Activated CD8-positive, alpha-beta T cell treated with anti-CD3 and anti-CD28 coated beads for 36 hours (primary cell): ENCODE measurements at regions of chr16 and their contacts with region 1.

Region 1: GRCh38 chr16:81715358-81716196 is 63.5 kb upstream of the PLCG2 start:
- DNase-seq: peak; percentile 51
- ATAC-seq: peak; percentile 35
- H3K4me3 Mint-ChIP-seq: peak overlapping the region; percentile 10
- H3K27ac Mint-ChIP-seq: peak overlapping the region; percentile 65
- H3K4me1 Mint-ChIP-seq: peaks cover 43% of the 10 kb centered on the region
- H3K27me3 Mint-ChIP-seq: no peaks in the 10 kb centered on the region
- CTCF ChIP-seq: no peak

Region 2: GRCh38 chr16:81600901-81601428 is 114.6 kb before region 1 on chr16:
- CTCF ChIA-PET with region 1: no interaction called
- POLR2A ChIA-PET with region 1: no interaction called
- intact Hi-C with region 1: no loop called
- DNase-seq: no peak
- ATAC-seq: no peak
- H3K4me3 Mint-ChIP-seq: no peak overlapping the region
- H3K27ac Mint-ChIP-seq: no peak overlapping the region
- H3K4me1 Mint-ChIP-seq: peaks cover 3% of the 10 kb centered on the region
- H3K27me3 Mint-ChIP-seq: no peaks in the 10 kb centered on the region
- CTCF ChIP-seq: no peak

Region 3: GRCh38 chr16:81623363-81624102 is 92.0 kb before region 1 on chr16:
- CTCF ChIA-PET with region 1: interaction called, 11 read pairs
- POLR2A ChIA-PET with region 1: interaction called, 3 read pairs
- intact Hi-C with region 1: no loop called
- DNase-seq: peak; percentile 74
- ATAC-seq: no peak
- H3K4me3 Mint-ChIP-seq: no peak overlapping the region
- H3K27ac Mint-ChIP-seq: no peak overlapping the region
- H3K4me1 Mint-ChIP-seq: peaks cover 5% of the 10 kb centered on the region
- H3K27me3 Mint-ChIP-seq: no peaks in the 10 kb centered on the region
- CTCF ChIP-seq: peak; percentile 69

Region 4: GRCh38 chr16:81632392-81633146 is 83.0 kb before region 1 on chr16:
- CTCF ChIA-PET with region 1: no interaction called
- POLR2A ChIA-PET with region 1: interaction called, 3 read pairs
- intact Hi-C with region 1: loop called (anchors 5 kb)
- DNase-seq: peak; percentile 94
- ATAC-seq: peak; percentile 83
- H3K4me3 Mint-ChIP-seq: peak overlapping the region; percentile 57
- H3K27ac Mint-ChIP-seq: peak overlapping the region; percentile 96
- H3K4me1 Mint-ChIP-seq: peaks cover 69% of the 10 kb centered on the region
- H3K27me3 Mint-ChIP-seq: no peaks in the 10 kb centered on the region
- CTCF ChIP-seq: no peak

Region 5: DNA sequence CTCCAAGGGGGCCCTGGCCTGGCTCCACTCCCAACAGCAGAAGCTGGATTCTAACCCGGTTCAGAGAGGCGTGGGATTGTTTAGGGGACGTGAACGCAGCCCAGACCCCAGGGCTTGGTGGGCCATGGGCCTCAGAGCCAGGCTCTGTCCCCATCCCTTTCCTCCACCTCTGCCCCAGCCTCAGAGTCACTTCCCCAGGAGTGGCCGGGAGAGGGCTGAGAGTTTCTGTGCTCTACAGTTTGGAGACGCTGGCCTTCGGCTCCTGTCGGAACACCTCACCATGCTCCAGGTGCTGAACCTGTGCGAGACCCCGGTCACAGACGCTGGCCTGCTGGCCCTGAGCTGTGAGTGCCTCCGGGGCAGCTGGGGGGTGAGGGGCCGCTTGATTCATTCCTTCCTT is 10.3 kb before region 1 on chr16:
- CTCF ChIA-PET with region 1: no interaction called
- POLR2A ChIA-PET with region 1: no interaction called
- intact Hi-C with region 1: no loop called
- DNase-seq: no peak
- ATAC-seq: no peak
- H3K4me3 Mint-ChIP-seq: no peak overlapping the region
- H3K27ac Mint-ChIP-seq: no peak overlapping the region
- H3K4me1 Mint-ChIP-seq: peaks cover 2% of the 10 kb centered on the region
- H3K27me3 Mint-ChIP-seq: no peaks in the 10 kb centered on the region
- CTCF ChIP-seq: no peak

Region 6: DNA sequence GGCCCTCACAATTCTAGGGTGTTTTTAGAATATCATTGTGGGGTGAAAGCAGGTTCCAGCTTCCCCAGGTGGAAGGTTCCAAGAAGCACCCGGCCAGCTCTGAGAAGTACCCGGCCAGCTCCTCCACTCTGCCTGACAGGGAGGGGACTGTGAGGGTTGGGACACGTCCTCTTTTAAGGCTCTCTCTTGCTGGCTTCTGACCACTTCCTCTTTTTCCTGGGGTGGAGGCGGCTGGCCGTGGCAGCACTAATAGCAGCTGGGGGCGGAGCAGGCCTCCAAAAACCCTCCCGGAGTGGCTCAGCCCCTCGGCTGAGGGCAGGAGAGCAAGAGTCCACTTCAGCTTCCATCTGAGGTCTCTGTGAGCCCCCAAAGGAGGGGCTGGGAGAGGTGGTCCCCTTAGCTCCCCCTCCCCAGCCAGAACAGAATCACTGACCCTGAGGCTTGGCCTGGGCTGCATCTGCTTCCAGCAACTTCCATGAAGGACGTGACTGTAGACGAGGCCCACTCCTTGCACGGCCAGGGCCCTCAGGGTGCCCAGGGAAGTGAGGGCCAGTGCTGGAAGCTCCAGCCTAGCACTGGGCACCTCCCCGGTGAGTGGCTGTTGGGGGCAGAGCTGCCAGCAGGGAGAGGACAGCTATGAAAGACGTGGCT is 36.8 kb after region 1 on chr16:
- CTCF ChIA-PET with region 1: no interaction called
- POLR2A ChIA-PET with region 1: no interaction called
- intact Hi-C with region 1: no loop called
- DNase-seq: no peak
- ATAC-seq: peak; percentile 39
- H3K4me3 Mint-ChIP-seq: no peak overlapping the region
- H3K27ac Mint-ChIP-seq: no peak overlapping the region
- H3K4me1 Mint-ChIP-seq: peaks cover 14% of the 10 kb centered on the region
- H3K27me3 Mint-ChIP-seq: no peaks in the 10 kb centered on the region
- CTCF ChIP-seq: no peak

Region 7: DNA sequence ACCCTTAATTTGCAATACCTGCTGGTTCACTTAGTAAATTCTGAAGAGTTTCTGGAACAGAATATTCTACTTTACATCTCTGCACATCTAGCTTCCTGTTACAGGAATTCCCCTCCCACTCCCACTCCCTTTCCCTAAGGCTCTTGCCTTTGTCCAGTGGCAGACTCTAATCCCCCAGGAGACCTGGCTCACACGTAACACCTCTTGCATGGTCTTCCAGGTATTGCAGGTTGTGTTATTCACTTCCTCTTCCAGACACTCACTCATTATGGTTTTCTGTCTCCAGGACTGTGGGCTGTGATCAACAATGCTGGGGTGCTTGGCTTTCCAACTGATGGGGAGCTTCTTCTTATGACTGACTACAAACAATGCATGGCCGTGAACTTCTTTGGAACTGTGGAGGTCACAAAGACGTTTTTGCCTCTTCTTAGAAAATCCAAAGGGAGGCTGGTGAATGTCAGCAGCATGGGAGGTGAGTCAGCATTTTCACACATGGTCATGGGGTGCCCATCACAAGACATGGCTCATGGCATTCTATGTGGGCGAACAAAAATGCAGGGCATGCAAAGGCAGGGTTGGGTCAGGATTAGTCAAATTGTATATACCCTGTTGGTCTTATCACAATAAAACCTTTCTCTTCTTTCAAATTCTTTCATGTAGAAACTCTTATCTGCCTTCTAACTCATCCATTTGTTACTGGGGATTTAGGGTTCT is 355.2 kb after region 1 on chr16:
- CTCF ChIA-PET with region 1: no interaction called
- POLR2A ChIA-PET with region 1: no interaction called
- intact Hi-C with region 1: no loop called
- DNase-seq: no peak
- ATAC-seq: no peak
- H3K4me3 Mint-ChIP-seq: no peak overlapping the region
- H3K27ac Mint-ChIP-seq: no peak overlapping the region
- H3K4me1 Mint-ChIP-seq: peaks cover 7% of the 10 kb centered on the region
- H3K27me3 Mint-ChIP-seq: peaks cover 11% of the 10 kb centered on the region
- CTCF ChIP-seq: no peak